Right ventricle myocardium inferior (tissue), 1 donor: ENCODE measurements at regions of chr13 and their contacts with region 1.

Region 1: DNA sequence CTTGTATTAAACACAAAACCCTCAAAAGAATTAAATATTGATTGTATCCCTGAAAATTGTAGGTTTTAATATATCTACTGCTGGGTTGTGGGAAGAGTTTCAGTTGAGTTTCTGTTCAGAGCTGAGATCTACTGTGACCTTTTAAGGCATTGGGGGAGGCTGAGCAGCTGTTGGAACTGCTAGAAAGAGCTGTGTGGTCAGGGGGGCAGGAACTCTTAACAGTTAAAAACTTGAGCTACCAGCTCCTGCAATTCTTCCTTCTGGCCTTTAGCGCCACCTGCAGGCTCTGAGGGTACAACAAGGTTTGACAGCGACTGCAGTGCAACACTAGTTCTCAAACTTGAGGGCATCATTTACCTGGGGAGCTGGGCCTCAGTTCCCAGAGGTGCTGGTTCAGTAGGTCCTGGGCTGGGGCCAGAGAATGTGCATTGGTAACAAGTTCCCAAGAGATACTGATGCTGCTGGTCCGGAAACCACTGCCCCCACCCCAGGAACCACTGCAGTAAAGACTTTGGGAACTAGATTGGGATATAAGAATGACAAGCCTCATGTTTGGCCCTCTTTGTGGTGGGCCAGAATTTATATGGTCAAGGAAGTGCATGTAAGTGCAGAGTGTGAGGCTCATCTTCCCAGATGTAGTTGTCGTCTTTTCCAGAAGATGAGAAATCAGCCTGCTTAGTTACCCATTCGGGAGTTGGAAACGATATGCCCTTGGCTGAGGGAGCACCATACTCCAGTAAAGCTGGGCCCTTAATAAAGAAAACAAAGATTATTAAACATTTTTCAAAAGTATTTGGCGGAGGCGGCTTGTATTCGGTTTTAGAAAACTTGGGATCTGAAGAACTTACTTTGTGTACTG is 2.6 kb downstream of the RNASEH2B start:
- DNase-seq: peak; percentile 92
- ATAC-seq: peak; percentile 30

Region 2: DNA sequence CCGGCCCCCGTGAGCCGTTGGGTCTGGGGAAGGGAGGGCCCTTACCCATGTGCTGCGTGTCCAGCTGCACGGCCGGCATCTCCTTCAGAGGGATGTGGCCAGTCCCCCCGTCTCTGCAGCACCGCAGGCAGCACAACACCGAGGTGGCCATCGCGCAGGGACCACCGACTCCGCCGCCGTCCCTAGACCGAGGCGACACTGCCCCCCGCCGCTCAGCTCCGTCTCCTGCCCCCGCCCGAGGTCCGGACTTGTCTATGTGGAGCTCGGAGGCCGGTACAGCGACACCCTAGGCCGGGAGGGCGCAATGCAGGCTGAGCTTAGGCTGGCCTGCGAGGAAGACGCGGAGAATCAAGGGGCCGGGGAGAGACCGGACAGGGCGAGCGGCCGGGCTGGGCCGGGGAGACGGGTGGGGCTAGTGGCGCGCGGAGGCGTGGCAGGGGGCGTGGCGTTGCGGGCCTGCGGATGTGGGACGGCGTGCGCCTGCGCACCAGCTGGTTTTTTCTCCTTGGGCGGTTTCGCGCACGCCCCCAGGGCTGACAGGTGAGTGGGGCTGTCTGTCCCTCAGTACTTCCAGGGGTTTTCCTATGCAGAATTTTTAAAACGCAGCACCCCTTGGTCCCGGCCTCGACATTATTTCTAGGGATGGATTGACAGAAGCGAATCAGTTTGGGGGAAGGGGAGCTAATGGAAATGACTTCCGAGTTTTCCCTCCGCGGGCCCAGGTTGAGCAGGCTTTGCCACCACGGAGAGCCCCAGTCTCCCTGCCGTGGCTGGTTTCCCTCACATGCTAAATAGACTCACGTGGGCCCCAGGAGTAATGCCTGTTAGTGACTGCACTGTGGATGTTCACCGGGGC is 975.9 kb before region 1 on chr13 and contains the start of gene SPRYD7:
- intact Hi-C with region 1: loop called (anchors 2 kb)
- DNase-seq: peak; percentile 99
- ATAC-seq: peak; percentile 100
- total RNA-seq, gene SPRYD7: 11.4 TPM

Region 3: GRCh38 chr13:49976314-49977258 is 935.6 kb before region 1 on chr13:
- intact Hi-C with region 1: loop called (anchors 2 kb)
- DNase-seq: peak; percentile 88
- ATAC-seq: peak; percentile 50

Region 4: GRCh38 chr13:50370303-50370950 is 541.7 kb before region 1 on chr13:
- intact Hi-C with region 1: loop called (anchors 10 kb)
- DNase-seq: no peak
- ATAC-seq: no peak

Region 5: GRCh38 chr13:50826035-50826434 is 86.1 kb before region 1 on chr13:
- intact Hi-C with region 1: no loop called
- DNase-seq: no peak
- ATAC-seq: no peak